ENCODE measurements at regions of chr14 and their contacts with region 1.

Region 1: GRCh38 chr14:98218218-98218617 is 1053.8 kb downstream of the BCL11B start:
- DNase-seq: no peak
- ATAC-seq: no peak
- H3K4me3 Mint-ChIP-seq: no peak overlapping the region
- H3K27ac Mint-ChIP-seq: no peak overlapping the region
- H3K4me1 Mint-ChIP-seq: peaks cover 37% of the 10 kb centered on the region
- H3K27me3 Mint-ChIP-seq: no peaks in the 10 kb centered on the region

Region 2: DNA sequence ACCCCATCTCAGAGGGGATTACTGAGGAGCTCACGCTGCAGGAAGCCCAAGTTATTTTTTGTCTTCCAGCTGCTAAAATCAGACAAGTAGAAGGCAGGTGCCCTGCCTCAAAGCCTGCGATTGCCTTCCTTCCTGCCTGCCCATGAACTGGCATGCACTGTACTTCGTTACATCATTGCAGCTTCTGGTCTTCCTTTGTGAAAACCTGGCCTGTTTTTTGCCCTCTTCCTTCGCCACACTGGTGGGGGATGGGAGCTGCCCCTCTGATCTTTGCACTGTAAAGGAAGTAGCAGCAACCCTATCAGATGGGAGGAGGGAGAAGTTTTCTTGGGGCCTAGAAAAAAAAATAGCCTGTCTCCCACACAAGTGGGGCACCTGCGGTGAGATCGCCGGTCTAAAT is 44.9 kb before region 1 on chr14:
- CTCF ChIA-PET with region 1: interaction called, 3 read pairs
- POLR2A ChIA-PET with region 1: interaction called, 3 read pairs
- intact Hi-C with region 1: loop called in 1 of 2 experiments (anchors 1 kb)
- DNase-seq: peak; percentile 70
- ATAC-seq: no peak
- H3K4me3 Mint-ChIP-seq: peak overlapping the region; percentile 50
- H3K27ac Mint-ChIP-seq: peak overlapping the region; percentile 99
- H3K4me1 Mint-ChIP-seq: peaks cover 99% of the 10 kb centered on the region
- H3K27me3 Mint-ChIP-seq: no peaks in the 10 kb centered on the region

Region 3: DNA sequence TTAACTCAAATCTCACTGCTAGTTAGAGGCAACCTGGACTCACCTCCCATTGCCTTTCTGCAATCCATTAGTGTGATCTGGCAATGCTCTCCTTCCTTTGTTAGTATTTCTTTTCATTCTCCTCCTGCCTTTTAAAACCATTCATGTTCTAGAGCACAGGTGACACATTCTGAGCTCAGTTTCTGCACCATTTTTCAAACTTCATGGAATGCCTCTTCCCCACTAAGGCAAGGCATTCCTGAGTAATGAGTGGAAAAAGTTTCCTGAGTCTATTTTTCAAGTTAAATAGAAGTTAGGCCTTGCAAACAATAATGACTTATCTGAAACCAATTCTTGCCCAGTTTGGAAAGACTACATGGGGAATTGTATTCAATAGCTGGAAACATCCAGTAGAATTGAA is 52.0 kb after region 1 on chr14:
- CTCF ChIA-PET with region 1: no interaction called
- POLR2A ChIA-PET with region 1: no interaction called
- intact Hi-C with region 1: no loop called
- DNase-seq: no peak
- ATAC-seq: no peak
- H3K4me3 Mint-ChIP-seq: no peak overlapping the region
- H3K27ac Mint-ChIP-seq: no peak overlapping the region
- H3K4me1 Mint-ChIP-seq: peaks cover 3% of the 10 kb centered on the region
- H3K27me3 Mint-ChIP-seq: no peaks in the 10 kb centered on the region

Region 4: DNA sequence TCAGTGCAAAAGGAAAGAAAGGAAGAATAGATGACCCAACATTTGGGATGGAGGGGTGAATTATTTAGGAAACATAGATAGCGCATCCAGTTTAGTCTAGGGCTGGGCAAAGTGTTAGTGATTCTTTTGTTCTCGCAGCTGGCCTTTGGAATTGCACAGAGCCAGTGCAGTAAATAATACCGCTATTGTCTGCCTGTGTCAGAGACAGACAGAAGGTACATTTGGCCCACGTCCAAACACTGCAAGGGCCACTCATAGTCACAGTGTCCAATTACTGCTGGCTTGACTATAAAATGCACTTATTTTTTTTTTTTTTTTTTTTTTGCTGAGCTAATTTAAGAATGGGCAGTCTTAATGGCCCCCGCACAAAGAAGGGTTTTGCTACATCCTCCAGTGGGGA is 415.2 kb after region 1 on chr14:
- CTCF ChIA-PET with region 1: no interaction called
- POLR2A ChIA-PET with region 1: no interaction called
- intact Hi-C with region 1: no loop called
- DNase-seq: no peak
- ATAC-seq: no peak
- H3K4me3 Mint-ChIP-seq: no peak overlapping the region
- H3K27ac Mint-ChIP-seq: no peak overlapping the region
- H3K4me1 Mint-ChIP-seq: no peaks in the 10 kb centered on the region
- H3K27me3 Mint-ChIP-seq: no peaks in the 10 kb centered on the region